BJ (cell line): ENCODE measurements at regions of chr2 and their contacts with region 1.

Region 1: GRCh38 chr2:44974064-44974715 is 32.7 kb downstream of the SIX3 start:
- DNase-seq: no peak
- H3K4me3 ChIP-seq: no peak overlapping the region
- H3K27me3 ChIP-seq: peaks cover 7% of the 10 kb centered on the region
- CTCF ChIP-seq: peak; percentile 61

Region 2: DNA sequence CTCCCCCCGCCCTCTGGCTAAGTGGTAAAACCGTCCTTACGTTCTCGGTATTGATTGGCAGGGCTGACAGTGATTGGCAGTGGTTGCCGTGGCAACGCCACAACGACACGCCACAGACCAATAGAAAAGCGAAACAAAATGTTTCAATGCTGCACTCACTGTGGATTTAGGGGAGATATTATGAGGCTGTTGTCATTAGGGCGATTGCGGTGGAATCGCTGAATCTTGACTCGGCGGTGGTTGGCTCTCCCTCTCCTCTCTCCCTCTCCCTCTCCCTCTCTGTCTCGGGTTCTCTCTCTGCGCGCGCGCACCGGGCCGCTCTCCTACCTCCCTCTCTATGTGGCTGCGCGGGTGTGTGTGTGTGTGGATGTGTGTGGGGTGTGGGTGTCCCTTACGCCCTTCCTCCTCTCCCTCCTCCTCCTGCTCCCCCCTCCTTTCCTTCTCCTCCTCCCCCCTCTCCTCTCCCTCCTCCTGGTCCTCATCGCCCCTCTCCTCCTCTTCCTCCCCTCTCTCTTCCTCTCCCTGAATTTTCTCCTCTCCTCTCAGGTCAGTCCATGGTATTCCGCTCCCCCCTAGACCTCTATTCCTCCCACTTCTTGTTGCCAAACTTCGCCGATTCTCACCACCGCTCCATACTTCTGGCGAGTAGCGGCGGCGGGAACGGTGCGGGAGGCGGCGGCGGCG is 32.5 kb before region 1 on chr2 and contains the start of gene SIX3:
- CTCF ChIA-PET with region 1: no interaction called
- POLR2A ChIA-PET with region 1: no interaction called
- DNase-seq: no peak
- H3K4me3 ChIP-seq: peak within 1 kb of the TSS; percentile 17
- H3K27me3 ChIP-seq: peaks cover 64% of the 10 kb centered on the region
- CTCF ChIP-seq: no peak
- polyA plus RNA-seq, gene SIX3: not detected in 2 replicates

Region 3: DNA sequence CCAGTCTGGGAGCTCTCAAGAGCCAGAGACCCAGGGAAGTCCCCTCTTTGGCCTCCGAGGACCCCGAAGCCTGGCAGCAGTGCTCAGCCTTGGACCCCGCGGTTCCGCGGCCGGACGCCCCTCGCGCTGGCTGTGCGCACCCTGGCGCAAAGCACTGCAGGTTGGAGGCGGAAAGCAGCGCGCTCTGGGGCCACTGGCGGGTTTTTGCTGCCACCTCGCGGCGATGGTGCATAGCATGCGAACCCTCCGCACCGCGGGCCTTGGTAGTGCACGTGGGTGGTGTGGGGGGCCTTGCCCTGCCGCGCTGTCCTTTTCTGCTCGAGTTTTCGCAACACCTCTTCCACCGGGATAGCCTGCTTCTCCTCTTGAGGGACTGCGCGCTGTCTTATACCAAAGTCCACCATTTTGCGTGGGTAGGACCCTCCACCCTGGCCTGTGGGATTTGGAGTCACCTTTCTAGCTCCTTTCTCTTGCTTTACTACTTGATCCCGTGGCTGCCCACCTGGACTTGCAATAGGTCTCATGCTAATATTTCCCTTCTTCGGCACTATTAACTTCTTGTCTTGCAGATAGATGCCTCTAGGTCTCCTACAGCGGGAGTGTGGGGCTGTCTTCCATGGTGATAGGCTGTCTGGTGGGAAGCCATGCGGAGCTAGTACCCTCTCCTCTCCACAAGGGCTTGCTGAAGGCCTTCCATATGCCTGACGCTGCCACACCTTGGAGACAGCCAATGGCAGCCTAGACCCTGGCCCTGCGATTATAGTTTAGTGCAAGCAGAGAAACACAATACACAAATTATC is 18.4 kb before region 1 on chr2:
- CTCF ChIA-PET with region 1: interaction called, 44 read pairs
- POLR2A ChIA-PET with region 1: interaction called, 3 read pairs
- DNase-seq: no peak
- H3K4me3 ChIP-seq: no peak overlapping the region; the same call in 1 of the 2 replicates
- H3K27me3 ChIP-seq: peaks cover 41% of the 10 kb centered on the region
- CTCF ChIP-seq: peak; percentile 92

Region 4: DNA sequence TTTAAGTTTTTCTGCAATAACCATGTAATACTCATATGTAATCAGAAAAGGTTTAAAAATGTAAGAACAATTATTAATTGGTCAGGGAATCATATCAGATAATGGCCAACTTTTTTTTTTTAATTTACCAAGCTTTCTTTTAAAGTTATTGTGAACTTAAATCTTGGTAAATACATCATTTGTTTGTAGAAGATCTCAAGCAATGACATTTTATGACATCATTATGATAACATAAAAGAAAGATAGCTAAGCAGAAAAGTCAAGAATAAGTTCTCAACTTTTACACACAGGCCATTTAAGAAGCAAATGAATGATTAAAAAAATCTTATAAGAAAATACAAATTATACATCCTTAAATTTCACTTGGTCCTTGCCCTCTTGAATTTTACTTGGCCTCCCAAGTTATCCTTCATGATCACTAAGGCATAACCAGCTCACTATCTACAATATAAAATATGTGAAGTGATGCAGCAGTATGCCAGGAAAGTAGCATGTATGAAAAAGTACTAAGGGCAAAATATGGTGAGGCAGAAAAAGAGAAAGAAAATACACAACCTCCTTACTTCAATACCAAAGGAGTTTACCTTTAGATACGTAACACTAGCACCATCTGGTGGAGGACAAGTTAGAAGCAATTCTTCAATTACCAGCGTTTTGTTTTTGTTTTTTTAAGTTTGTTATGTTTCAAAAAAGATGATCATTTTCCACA is 520.2 kb after region 1 on chr2:
- CTCF ChIA-PET with region 1: interaction called, 182 read pairs
- POLR2A ChIA-PET with region 1: no interaction called
- DNase-seq: no peak
- H3K4me3 ChIP-seq: no peak overlapping the region
- H3K27me3 ChIP-seq: no peaks in the 10 kb centered on the region
- CTCF ChIP-seq: peak; percentile 67